Colonic mucosa (tissue), 4 donors: ENCODE measurements at regions of chr9 and their contacts with region 1.

Region 1: GRCh38 chr9:89602978-89603766 is 1.6 kb upstream of the GADD45G start:
- DNase-seq: peak; percentile 96
- H3K4me3 ChIP-seq: peak overlapping the region; percentile 95
- H3K27ac ChIP-seq: peak overlapping the region; percentile 93
- H3K4me1 ChIP-seq: no peaks in the 10 kb centered on the region
- H3K27me3 ChIP-seq: no peaks in the 10 kb centered on the region
- CTCF ChIP-seq: peak; percentile 79

Region 2: DNA sequence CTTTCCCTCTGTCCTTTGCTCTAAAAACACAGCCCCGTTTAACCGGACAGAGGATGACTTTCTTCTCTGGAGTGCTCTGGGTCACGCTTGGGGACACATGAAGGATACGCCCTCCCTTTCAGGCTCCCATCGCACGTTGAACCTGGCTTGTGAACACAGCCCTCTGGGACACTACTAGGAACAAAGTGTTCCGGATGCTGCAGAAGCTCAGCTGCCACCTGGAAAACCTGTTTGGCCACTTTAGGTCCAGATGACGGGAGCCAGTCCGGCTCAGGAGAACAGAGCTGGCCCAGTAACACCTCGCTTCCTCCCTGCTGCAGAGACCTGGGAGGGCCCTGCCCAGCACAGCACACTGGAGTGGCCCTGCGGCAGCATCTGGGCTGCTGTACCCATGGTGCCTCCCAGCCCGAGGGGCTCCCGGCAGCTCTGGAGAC is 61.7 kb after region 1 on chr9:
- intact Hi-C with region 1: no loop called
- DNase-seq: peak; percentile 89
- H3K4me3 ChIP-seq: no peak overlapping the region
- H3K27ac ChIP-seq: peak overlapping the region; percentile 61
- H3K4me1 ChIP-seq: peaks cover 20% of the 10 kb centered on the region
- H3K27me3 ChIP-seq: no peaks in the 10 kb centered on the region
- CTCF ChIP-seq: no peak

Region 3: GRCh38 chr9:89732295-89732938 is 129.2 kb after region 1 on chr9:
- intact Hi-C with region 1: loop called (anchors 10 kb)
- DNase-seq: no peak
- H3K4me3 ChIP-seq: no peak overlapping the region
- H3K27ac ChIP-seq: peak overlapping the region; percentile 60
- H3K4me1 ChIP-seq: peaks cover 12% of the 10 kb centered on the region
- H3K27me3 ChIP-seq: no peaks in the 10 kb centered on the region
- CTCF ChIP-seq: no peak

Region 4: GRCh38 chr9:89919169-89919681 is 316.1 kb after region 1 on chr9:
- intact Hi-C with region 1: loop called (anchors 5 kb)
- DNase-seq: peak; percentile 67
- H3K4me3 ChIP-seq: no peak overlapping the region
- H3K27ac ChIP-seq: no peak overlapping the region
- H3K4me1 ChIP-seq: no peaks in the 10 kb centered on the region
- H3K27me3 ChIP-seq: no peaks in the 10 kb centered on the region
- CTCF ChIP-seq: no peak

Region 5: DNA sequence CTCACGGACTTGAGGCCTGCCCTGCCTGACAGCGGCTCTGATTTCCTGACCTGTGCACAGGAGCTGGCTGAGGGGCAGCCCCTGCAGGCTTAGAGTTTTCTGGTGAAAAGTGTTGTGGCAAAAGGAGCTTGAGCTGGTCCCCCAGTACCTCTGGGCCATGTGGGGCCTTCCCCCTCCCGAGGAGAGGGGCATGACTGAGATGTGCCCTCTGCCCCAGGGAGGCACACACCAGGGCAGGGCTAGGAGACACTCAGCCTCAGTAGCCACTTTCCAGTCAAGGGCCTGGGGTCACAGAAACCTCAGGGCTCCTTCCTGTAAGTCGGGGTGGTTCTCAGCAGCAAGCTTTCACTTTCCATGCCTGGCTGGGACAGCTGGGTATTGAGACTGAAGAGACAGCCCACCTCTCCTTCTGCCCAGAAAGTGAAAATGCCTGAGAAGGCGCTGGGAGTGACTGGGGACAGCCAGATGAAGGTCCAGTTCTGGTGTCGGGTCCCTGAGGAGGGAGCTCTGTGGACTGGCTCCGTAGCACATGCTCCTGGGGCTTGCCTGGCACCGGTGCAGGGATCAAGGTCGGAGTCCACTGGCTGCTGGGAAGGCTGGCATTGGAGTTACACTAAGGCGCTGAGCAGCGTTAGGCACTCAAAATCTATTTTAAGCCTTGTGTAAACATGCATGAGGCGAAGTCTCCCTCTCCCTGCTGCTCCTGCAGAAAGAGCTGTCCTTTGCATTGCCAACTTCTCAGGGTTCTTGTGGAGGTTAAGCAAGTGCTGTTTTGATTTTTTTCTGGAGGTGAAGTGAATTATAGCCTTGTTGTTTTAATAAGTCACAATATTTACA is 396.6 kb after region 1 on chr9:
- intact Hi-C with region 1: loop called (anchors 5 kb)
- DNase-seq: peak; percentile 90
- H3K4me3 ChIP-seq: peak overlapping the region; percentile 4
- H3K27ac ChIP-seq: peak overlapping the region; percentile 92
- H3K4me1 ChIP-seq: peaks cover 9% of the 10 kb centered on the region
- H3K27me3 ChIP-seq: no peaks in the 10 kb centered on the region
- CTCF ChIP-seq: no peak

Region 6: DNA sequence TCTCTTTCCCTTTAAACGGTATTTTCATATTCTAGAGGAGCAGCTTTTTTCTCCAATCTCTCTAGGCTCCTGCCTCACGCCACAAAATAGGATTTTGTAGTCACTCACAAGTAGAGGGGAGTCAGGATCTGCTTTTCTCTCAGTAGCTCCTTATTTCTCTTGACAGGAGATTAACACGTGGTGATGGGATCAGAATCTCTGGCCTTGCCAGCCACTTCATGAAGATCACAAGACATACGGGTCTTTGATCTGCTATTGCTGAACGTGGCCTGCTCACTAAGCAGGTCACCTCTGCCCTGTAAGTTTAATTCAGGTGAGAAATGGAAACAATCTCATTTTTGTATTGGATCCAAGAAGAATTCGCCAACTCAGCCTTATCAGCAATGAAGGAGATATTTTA is 782.0 kb after region 1 on chr9:
- intact Hi-C with region 1: no loop called
- DNase-seq: no peak
- H3K4me3 ChIP-seq: no peak overlapping the region
- H3K27ac ChIP-seq: no peak overlapping the region
- H3K4me1 ChIP-seq: no peaks in the 10 kb centered on the region
- H3K27me3 ChIP-seq: no peaks in the 10 kb centered on the region
- CTCF ChIP-seq: no peak